ENCODE measurements at regions of chr18 and their contacts with region 1.

Region 1: GRCh38 chr18:49412679-49413078 is 47.8 kb downstream of the DYM start:
- DNase-seq: no peak

Region 2: GRCh38 chr18:48680339-48681221 is 732.1 kb before region 1 on chr18:
- intact Hi-C with region 1: loop called (anchors 2 kb)
- DNase-seq: peak; percentile 93

Region 3: DNA sequence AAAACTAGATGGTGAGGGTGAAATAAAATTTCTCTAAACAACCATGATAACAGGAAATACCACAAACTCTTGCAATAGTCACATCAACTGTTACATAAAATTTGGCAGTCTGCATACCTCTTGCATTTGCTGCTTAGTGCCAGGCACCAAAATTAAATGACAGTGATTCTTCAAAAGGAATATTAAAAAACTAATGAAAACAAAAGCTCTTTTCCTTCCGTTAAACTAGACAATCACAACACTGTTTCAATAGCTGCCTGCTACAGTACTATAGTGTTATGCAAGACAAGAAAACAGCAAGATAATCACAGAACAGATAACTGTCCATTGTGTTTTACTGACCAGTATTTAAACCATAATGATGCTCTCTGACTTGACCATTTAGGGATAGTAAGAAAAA is 222.9 kb before region 1 on chr18:
- intact Hi-C with region 1: loop called (anchors 10 kb)
- DNase-seq: no peak

Region 4: GRCh38 chr18:49250816-49251388 is 161.8 kb before region 1 on chr18:
- intact Hi-C with region 1: loop called (anchors 10 kb)
- DNase-seq: no peak

Region 5: GRCh38 chr18:49645841-49646351 is 233.2 kb after region 1 on chr18:
- intact Hi-C with region 1: no loop called
- DNase-seq: peak; percentile 78